ENCODE measurements at regions of chr18 and their contacts with region 1.

Region 1: GRCh38 chr18:13558124-13558523 is 168.2 kb downstream of the FAM210A start:
- DNase-seq: peak; percentile 84
- H3K4me3 ChIP-seq: no peak overlapping the region
- H3K27ac ChIP-seq: no peak overlapping the region
- H3K4me1 ChIP-seq: peaks cover 21% of the 10 kb centered on the region
- CTCF ChIP-seq: peak; percentile 93

Region 2: GRCh38 chr18:13211534-13211933 is 346.6 kb before region 1 on chr18:
- CTCF ChIA-PET with region 1: no interaction called
- POLR2A ChIA-PET with region 1: no interaction called
- intact Hi-C with region 1: no loop called
- DNase-seq: no peak
- H3K4me3 ChIP-seq: no peak overlapping the region
- H3K27ac ChIP-seq: no peak overlapping the region
- H3K4me1 ChIP-seq: no peaks in the 10 kb centered on the region
- CTCF ChIP-seq: no peak

Region 3: DNA sequence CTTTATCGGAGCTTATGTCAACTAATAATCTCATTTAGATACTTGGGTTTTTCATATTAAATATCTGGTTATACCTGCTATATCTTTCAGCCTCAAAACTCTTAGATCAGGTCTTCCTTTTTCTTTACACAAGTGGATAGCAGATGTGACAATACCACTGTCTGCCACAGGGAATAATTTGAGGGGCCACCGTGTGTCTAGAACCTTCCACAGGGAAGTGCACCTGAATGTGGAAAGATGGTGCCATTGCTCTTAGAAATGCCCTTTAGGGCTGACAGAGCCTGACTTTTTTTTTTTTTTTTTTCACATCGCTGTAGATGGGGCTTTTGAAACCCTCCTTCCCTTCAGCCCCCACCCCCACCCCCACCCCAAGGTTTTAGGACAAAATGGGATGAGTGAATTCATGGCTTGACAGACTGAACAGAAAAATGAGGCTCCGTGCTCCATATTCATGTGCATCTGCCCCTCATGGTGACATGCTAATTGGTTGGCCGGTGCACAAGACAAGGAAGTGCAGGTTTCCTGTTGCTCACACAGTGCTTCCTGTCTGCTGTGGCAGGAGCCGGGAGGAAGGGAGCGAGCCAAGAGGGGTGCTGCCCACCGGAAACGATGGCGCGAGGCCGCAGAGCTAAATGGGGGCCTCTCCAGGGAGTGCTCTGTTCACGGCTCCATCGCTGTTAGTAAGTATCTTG is 93.5 kb before region 1 on chr18:
- CTCF ChIA-PET with region 1: no interaction called
- POLR2A ChIA-PET with region 1: no interaction called
- intact Hi-C with region 1: no loop called
- DNase-seq: peak; percentile 91
- H3K4me3 ChIP-seq: peak overlapping the region; percentile 70
- H3K27ac ChIP-seq: peak overlapping the region; percentile 65
- H3K4me1 ChIP-seq: peaks cover 29% of the 10 kb centered on the region
- CTCF ChIP-seq: 0 out of 2 replicates have a peak, but pooled peaks have one; percentile 18

Region 4: DNA sequence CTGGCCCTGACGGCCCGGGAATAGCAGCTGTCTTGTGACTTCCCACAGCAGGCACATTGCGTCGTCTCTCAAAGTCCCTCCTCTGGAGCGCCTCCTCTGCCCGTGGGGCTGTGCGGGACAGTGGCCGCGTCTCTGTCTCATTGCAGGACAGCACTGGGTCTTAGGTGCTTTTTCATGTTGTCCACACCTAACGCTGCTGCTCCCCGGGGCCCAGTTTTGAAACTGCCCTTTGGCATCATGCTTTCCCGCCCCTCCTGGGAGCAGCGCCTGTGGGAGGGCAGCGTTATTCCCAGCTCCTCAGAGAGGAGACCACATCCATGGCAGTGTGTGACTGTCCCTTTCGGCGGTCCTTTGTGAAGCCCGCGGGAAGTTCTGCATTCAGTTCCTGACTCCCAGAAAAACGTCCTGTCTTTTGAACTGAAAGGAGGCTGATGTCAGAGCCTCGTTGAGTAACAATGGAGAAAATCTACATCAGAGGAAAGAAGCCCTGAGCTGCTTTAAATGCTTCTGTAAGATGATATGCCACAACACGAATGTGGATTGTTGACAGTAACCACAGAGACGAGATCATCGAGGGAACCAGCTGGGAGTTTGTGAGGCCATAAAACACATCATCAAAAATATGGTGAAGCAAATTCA is 57.8 kb before region 1 on chr18:
- CTCF ChIA-PET with region 1: no interaction called
- POLR2A ChIA-PET with region 1: no interaction called
- intact Hi-C with region 1: no loop called
- DNase-seq: no peak
- H3K4me3 ChIP-seq: no peak overlapping the region
- H3K27ac ChIP-seq: no peak overlapping the region
- H3K4me1 ChIP-seq: no peaks in the 10 kb centered on the region
- CTCF ChIP-seq: no peak

Region 5: DNA sequence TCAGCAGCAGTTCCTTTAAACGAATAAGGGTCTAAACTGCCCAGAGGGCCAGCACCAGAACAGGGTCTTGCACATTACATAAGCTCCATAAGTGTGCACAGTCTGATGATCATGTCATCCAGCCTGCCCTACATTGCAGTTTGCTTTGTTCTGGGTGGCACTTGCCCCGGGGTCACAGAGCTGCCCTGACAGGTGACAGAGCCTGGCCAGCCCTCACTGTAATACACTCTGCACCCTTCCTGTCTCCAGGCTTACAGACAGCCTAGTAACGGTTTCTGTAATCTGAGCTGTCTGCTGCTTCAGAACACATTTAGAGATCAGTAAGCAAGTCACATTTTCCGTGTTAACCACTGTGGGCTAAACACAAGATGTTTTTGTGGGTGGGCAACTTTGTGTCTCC is 45.1 kb before region 1 on chr18:
- CTCF ChIA-PET with region 1: no interaction called
- POLR2A ChIA-PET with region 1: no interaction called
- intact Hi-C with region 1: no loop called
- DNase-seq: no peak
- H3K4me3 ChIP-seq: no peak overlapping the region
- H3K27ac ChIP-seq: no peak overlapping the region
- H3K4me1 ChIP-seq: no peaks in the 10 kb centered on the region
- CTCF ChIP-seq: no peak

Region 6: GRCh38 chr18:13577091-13577697 is 19.1 kb after region 1 on chr18:
- CTCF ChIA-PET with region 1: no interaction called
- POLR2A ChIA-PET with region 1: interaction called, 12 read pairs
- intact Hi-C with region 1: no loop called
- DNase-seq: no peak
- H3K4me3 ChIP-seq: peak overlapping the region; percentile 35
- H3K27ac ChIP-seq: peak overlapping the region; percentile 8
- H3K4me1 ChIP-seq: peaks cover 39% of the 10 kb centered on the region
- CTCF ChIP-seq: no peak

Region 7: DNA sequence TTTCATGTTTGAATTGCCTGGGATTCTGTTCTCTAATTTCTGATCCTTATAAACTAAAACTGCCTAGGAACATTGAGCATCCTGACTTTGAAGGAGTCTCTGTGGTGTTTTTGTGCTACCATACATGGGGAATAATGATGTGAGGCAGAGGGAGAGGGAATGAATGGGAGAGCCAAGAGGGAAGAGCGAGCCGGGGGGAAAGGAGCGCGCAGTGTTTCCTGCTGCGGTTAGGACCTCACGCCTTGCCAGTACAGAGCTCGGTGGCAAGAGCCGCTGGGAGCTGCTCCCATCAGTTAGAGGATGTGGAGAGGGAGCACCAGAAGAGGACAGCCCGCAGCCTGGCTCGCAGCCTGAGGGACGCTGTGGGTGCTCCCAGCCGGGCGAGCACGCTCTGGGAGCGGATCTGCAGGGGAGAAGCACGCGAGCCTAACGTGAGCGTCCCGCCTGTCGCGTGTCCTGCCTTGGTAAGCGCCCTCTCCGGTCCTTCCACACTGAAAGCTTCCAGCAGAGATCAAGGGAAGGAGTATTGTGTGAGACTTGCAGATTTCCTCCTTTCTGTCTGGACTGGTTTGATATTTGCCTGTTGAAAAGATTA is 53.6 kb after region 1 on chr18:
- CTCF ChIA-PET with region 1: interaction called, 6 read pairs
- POLR2A ChIA-PET with region 1: interaction called, 65 read pairs
- intact Hi-C with region 1: no loop called
- DNase-seq: no peak
- H3K4me3 ChIP-seq: peak overlapping the region; percentile 85
- H3K27ac ChIP-seq: peak overlapping the region; percentile 98
- H3K4me1 ChIP-seq: peaks cover 64% of the 10 kb centered on the region
- CTCF ChIP-seq: 0 out of 2 replicates have a peak, but pooled peaks have one; percentile 16

Region 8: GRCh38 chr18:13629841-13630715 is 72.0 kb after region 1 on chr18:
- CTCF ChIA-PET with region 1: interaction called, 4 read pairs
- POLR2A ChIA-PET with region 1: no interaction called
- intact Hi-C with region 1: loop called (anchors 1 kb)
- DNase-seq: peak; percentile 82
- H3K4me3 ChIP-seq: no peak overlapping the region
- H3K27ac ChIP-seq: peak overlapping the region; percentile 41
- H3K4me1 ChIP-seq: peaks cover 13% of the 10 kb centered on the region
- CTCF ChIP-seq: peak; percentile 97

Region 9: DNA sequence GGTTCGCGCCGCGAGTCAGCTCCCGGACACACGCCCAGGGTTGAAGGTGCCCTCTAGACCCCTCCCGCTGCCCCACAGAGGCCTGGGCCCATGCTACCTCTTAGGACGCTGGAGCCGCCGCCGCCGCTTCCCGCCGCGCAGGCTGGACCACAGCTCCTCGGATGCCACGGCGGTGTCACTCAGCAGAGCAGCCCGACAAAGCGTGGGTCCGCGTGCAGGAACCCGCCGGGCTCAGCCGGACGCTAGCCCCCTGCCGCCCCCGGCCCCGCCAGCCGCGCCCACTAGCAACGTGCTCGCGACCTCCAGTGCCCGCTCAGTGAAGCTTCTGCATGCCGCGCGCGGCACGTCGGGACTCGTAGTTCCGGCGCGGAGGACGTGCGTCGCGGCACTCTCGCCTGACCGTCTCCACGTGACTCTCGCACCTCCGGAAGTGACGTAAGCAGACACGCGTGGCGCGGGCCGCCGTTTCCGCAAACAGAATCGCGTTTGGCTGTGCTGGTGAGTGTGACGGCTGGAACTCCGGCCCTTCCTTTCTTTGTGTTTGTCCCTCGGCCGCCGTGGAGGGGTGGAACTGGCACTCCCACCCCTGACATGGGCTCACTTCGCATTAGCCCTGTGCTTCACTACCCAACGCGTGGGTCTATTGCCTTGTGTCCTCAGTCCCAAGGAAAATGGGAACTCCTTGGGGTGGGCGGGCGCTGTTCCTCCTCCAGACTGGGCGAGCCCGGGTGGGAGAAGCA is 168.3 kb after region 1 on chr18 and contains the starts of genes FAM210A and RNMT:
- CTCF ChIA-PET with region 1: no interaction called
- POLR2A ChIA-PET with region 1: interaction called, 4 read pairs
- intact Hi-C with region 1: loop called (anchors 5 kb)
- DNase-seq: peak; percentile 99
- H3K4me3 ChIP-seq: peak within 1 kb of the TSS; percentile 82
- H3K27ac ChIP-seq: peak within 1 kb of the TSS; percentile 30
- H3K4me1 ChIP-seq: peaks cover 23% of the 10 kb centered on the region
- CTCF ChIP-seq: peak; percentile 26; the same call in 1 of the 2 replicates
- total RNA-seq, gene FAM210A: 22.6 and 23.1 TPM in 2 replicates
- total RNA-seq, gene RNMT: 17.3 and 17.9 TPM in 2 replicates

Region 10: GRCh38 chr18:13813271-13813849 is 255.2 kb after region 1 on chr18:
- CTCF ChIA-PET with region 1: no interaction called
- POLR2A ChIA-PET with region 1: no interaction called
- intact Hi-C with region 1: loop called (anchors 1 kb)
- DNase-seq: peak; percentile 64
- H3K4me3 ChIP-seq: no peak overlapping the region
- H3K27ac ChIP-seq: no peak overlapping the region
- H3K4me1 ChIP-seq: no peaks in the 10 kb centered on the region
- CTCF ChIP-seq: peak; percentile 93

Measured in OCI-LY7 (cell line).